Naive thymus-derived CD4-positive, alpha-beta T cell (primary cell): ENCODE measurements at regions of chr13 and their contacts with region 1.

Region 1: GRCh38 chr13:79382545-79383289 is 23.3 kb downstream of the RBM26 start:
- DNase-seq: no peak
- ATAC-seq: peak; percentile 57
- H3K4me3 ChIP-seq: peak overlapping the region; percentile 11
- H3K4me3 Mint-ChIP-seq: peak overlapping the region in 9 of 10 donors; percentile 36 to 74 (median 65)
- H3K27ac ChIP-seq: no peak overlapping the region
- H3K27ac Mint-ChIP-seq: peak overlapping the region in 8 of 9 donors; percentile 9 to 81 (median 62)
- H3K4me1 ChIP-seq: peaks cover 16 to 28% of the 10 kb centered on the region in 2 donors
- H3K4me1 Mint-ChIP-seq: peaks cover 41 to 86% (median 76%) of the 10 kb centered on the region in 7 donors
- H3K27me3 ChIP-seq: no peaks in the 10 kb centered on the region
- H3K27me3 Mint-ChIP-seq: no peaks in the 10 kb centered on the region

Region 2: DNA sequence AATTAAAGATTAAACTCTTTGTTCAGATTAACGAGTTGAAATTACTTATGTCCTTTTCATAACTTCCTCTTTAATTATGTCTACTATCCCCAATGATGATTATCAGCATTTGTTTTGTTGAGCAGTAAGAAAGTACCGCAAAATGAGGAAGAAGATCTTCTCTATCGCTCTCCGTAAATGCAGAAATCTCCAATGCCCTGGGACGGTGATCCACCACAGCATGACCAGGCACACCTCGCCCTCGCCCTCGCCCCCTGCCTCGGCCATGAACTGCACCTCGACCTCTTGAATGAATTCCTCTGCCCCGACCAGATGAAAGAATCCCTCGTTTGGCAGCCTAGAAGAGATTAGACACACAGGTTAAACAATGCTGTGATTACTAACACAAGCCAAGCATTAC is 45.8 kb before region 1 on chr13:
- CTCF ChIA-PET with region 1: no interaction called
- POLR2A ChIA-PET with region 1: no interaction called
- intact Hi-C with region 1: loop called in 1 of 2 experiments (anchors 2 kb)
- DNase-seq: no peak
- ATAC-seq: peak; percentile 67
- H3K4me3 ChIP-seq: no peak overlapping the region
- H3K4me3 Mint-ChIP-seq: no peak overlapping the region
- H3K27ac ChIP-seq: no peak overlapping the region
- H3K27ac Mint-ChIP-seq: peak overlapping the region in 3 of 9 donors; percentile 28 to 57 (median 37)
- H3K4me1 ChIP-seq: no peaks in the 10 kb centered on the region
- H3K4me1 Mint-ChIP-seq: peaks cover 4 to 10% (median 9%) of the 10 kb centered on the region in 7 donors
- H3K27me3 ChIP-seq: no peaks in the 10 kb centered on the region
- H3K27me3 Mint-ChIP-seq: no peaks in the 10 kb centered on the region